ENCODE measurements at regions of chr7 and their contacts with region 1.

Region 1: DNA sequence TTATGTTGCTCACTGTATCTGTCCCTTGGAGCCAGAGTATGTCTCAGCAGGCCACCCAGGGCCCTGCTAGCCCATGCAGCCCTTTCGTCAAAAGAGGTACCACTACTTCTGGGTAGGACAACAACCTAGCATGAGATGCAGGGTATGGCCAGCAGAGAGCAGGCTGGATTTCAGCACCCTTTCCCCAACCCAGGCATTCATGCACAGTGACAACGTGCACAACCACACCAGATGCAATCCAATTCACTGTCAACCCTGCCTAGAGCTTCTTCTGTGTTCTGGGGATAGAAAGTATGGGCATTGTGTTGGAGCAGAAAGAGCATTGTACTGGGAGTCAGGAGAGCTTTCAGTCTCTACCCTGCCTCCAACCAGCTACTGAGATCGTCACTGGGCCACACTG is 37.9 kb downstream of the JAZF1 start:
- DNase-seq: no peak
- ATAC-seq: no peak
- H3K4me3 ChIP-seq: no peak overlapping the region
- H3K4me3 Mint-ChIP-seq: no peak overlapping the region
- H3K27ac ChIP-seq: no peak overlapping the region
- H3K27ac Mint-ChIP-seq: no peak overlapping the region
- H3K4me1 ChIP-seq: no peaks in the 10 kb centered on the region
- H3K4me1 Mint-ChIP-seq: no peaks in the 10 kb centered on the region
- H3K27me3 ChIP-seq: no peaks in the 10 kb centered on the region
- H3K27me3 Mint-ChIP-seq: no peaks in the 10 kb centered on the region
- CTCF ChIP-seq: no peak

Region 2: GRCh38 chr7:28169230-28169629 is 26.6 kb after region 1 on chr7:
- CTCF ChIA-PET with region 1: no interaction called
- POLR2A ChIA-PET with region 1: no interaction called
- intact Hi-C with region 1: no loop called
- DNase-seq: no peak
- ATAC-seq: no peak
- H3K4me3 ChIP-seq: no peak overlapping the region
- H3K4me3 Mint-ChIP-seq: no peak overlapping the region
- H3K27ac ChIP-seq: no peak overlapping the region
- H3K27ac Mint-ChIP-seq: no peak overlapping the region
- H3K4me1 ChIP-seq: peaks cover 2% of the 10 kb centered on the region
- H3K4me1 Mint-ChIP-seq: peaks cover 16% of the 10 kb centered on the region
- H3K27me3 ChIP-seq: peaks cover 0 to 4% of the 10 kb centered on the region in 2 experiments
- H3K27me3 Mint-ChIP-seq: no peaks in the 10 kb centered on the region
- CTCF ChIP-seq: no peak

Region 3: GRCh38 chr7:28272461-28272877 is 129.8 kb after region 1 on chr7:
- CTCF ChIA-PET with region 1: no interaction called
- POLR2A ChIA-PET with region 1: no interaction called
- intact Hi-C with region 1: loop called in 1 of 2 experiments (anchors 2 kb)
- DNase-seq: peak in 8 of 14 experiments; percentile 2 to 60 (median 32)
- ATAC-seq: no peak
- H3K4me3 ChIP-seq: no peak overlapping the region
- H3K4me3 Mint-ChIP-seq: no peak overlapping the region
- H3K27ac ChIP-seq: no peak overlapping the region
- H3K27ac Mint-ChIP-seq: no peak overlapping the region
- H3K4me1 ChIP-seq: peaks cover 3% of the 10 kb centered on the region
- H3K4me1 Mint-ChIP-seq: peaks cover 5% of the 10 kb centered on the region
- H3K27me3 ChIP-seq: peaks cover 0 to 5% of the 10 kb centered on the region in 2 experiments
- H3K27me3 Mint-ChIP-seq: peaks cover 34% of the 10 kb centered on the region
- CTCF ChIP-seq: peak; percentile 37

Region 4: GRCh38 chr7:28784171-28784902 is 641.7 kb after region 1 on chr7:
- CTCF ChIA-PET with region 1: no interaction called
- POLR2A ChIA-PET with region 1: no interaction called
- intact Hi-C with region 1: no loop called
- DNase-seq: no peak
- ATAC-seq: no peak
- H3K4me3 ChIP-seq: no peak overlapping the region
- H3K4me3 Mint-ChIP-seq: no peak overlapping the region
- H3K27ac ChIP-seq: no peak overlapping the region
- H3K27ac Mint-ChIP-seq: no peak overlapping the region
- H3K4me1 ChIP-seq: no peaks in the 10 kb centered on the region
- H3K4me1 Mint-ChIP-seq: no peaks in the 10 kb centered on the region
- H3K27me3 ChIP-seq: no peaks in the 10 kb centered on the region
- H3K27me3 Mint-ChIP-seq: peaks cover 10% of the 10 kb centered on the region
- CTCF ChIP-seq: no peak

Measured in CD4-positive, alpha-beta T cell (primary cell).